ENCODE measurements at regions of chr14 and their contacts with region 1.

Region 1: DNA sequence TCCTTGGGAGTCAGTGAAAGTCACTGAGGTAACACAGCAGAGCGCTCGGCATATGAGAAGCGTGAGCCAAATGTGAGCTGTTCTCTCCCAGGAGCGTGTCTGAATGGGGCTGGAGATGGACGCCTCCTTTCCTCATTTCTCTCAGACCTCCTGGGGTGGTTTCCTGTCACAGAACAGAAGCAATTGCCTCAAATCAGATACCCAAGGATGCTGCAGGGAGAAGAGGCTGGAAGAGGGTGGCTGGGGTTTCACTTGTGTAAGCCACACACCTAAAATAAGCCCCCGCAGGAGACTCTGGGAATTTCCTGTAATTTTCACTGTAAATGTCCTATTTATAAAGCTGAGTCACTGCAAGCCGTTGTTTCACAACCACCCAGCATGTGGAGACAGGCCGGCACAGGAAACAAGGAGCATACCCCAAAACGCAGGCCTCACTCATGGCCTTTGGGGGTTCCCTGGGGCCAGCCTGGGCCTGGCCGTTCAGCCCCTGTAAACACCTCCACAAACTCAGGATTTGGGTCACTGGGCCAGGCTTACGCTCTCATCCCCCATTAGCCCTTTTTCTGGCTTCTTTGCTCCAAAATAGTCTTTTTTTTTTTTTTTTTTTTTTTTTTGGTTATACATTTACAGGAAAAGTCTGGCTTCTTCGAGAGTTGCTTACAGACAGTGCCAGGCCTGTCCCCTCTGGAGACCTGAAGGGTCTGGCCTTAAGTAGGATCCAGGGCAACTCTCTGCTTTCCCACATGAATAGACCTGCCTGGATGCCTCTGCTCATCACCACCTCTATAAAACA is 55.3 kb downstream of the VCPKMT start:
- DNase-seq: peak; percentile 65
- ATAC-seq: peak; percentile 6
- H3K4me3 Mint-ChIP-seq: peak overlapping the region; percentile 90
- H3K27ac Mint-ChIP-seq: peak overlapping the region; percentile 100
- H3K4me1 Mint-ChIP-seq: peaks cover 84% of the 10 kb centered on the region
- H3K27me3 Mint-ChIP-seq: no peaks in the 10 kb centered on the region

Region 2: GRCh38 chr14:49862089-49862673 is 198.9 kb before region 1 on chr14:
- CTCF ChIA-PET with region 1: interaction called, 28 read pairs
- POLR2A ChIA-PET with region 1: interaction called, 7 read pairs
- intact Hi-C with region 1: loop called in 1 of 2 experiments (anchors 1 kb)
- DNase-seq: peak; percentile 92
- ATAC-seq: peak; percentile 13
- H3K4me3 Mint-ChIP-seq: no peak overlapping the region
- H3K27ac Mint-ChIP-seq: no peak overlapping the region
- H3K4me1 Mint-ChIP-seq: peaks cover 20% of the 10 kb centered on the region
- H3K27me3 Mint-ChIP-seq: no peaks in the 10 kb centered on the region

Region 3: DNA sequence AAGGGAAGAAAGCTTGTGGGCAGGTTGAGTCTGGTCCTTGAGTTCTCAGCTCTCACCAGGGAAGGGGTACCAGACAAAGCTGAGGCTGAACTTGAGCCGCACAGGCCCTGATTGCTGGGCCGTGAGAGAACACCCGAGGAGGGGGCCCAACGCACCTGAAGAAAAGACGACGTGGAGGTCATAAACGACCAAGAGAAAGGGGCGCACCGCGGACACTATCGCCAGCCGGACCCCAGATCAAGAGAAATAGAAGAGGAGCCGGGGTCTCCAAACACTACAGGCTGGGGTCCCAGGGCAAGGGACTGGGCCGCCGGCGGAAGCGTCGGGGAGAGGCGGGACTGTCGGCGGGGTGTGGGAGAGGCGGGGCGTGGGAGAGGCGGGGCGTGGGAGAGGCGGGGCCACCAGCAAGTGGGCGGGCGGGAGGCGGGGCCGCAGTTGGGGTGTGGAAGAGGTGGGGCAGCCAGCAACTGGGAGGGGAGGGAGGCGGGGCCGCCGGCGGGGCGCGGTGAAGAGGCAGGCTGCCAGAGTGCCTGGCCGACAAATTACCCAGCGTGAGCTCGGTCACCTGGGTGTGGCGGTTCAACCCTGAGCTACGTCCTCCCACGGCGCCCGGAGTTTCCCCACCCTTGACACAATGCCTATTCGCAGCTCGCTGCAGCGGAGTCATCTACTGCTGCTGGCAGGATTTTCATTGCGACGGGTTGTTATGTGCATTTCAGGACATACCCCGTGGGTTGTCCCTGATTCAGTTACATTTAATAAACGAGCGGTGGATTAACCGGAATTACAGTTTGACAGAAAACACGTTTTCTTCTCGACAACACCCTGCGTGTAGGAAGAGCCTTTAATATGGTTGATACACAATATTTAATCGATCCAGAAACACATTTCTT is 193.0 kb before region 1 on chr14:
- CTCF ChIA-PET with region 1: interaction called, 28 read pairs
- POLR2A ChIA-PET with region 1: interaction called, 7 read pairs
- intact Hi-C with region 1: loop called (anchors 1 kb)
- DNase-seq: peak; percentile 100
- ATAC-seq: peak; percentile 87
- H3K4me3 Mint-ChIP-seq: peak overlapping the region; percentile 98
- H3K27ac Mint-ChIP-seq: peak overlapping the region; percentile 96
- H3K4me1 Mint-ChIP-seq: peaks cover 22% of the 10 kb centered on the region
- H3K27me3 Mint-ChIP-seq: no peaks in the 10 kb centered on the region

Region 4: DNA sequence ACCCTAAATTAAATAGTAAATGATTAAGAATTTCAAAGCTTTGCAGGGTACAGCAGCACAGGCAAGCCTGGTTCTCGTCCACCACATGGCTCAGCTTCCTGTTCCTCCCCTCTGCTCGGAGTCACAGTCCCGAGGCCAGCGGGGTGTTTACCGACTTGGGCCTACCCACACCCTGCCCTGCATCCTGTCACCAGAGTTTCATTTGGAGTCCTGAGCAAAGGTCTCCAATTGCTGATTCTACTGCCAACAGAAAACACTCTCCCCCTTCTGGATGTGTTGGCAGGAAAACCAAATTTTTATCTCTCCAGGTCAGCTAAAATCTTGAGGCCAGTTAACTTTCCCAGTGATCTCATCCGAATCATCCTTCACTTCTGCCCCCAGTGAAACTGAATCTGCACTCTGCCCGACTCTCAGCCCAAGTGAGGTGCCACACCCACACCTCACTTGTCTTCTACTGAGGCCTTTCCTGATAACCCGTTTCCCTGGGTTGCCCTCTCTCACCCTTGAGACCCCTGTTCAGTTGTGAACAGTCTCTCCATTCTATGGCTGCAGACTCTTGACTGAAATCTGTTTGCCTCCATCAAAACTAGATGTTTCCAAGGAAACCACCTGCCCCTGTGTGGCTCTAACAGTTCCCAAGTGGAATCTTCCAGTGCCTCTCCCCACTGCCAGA is 15.9 kb before region 1 on chr14:
- CTCF ChIA-PET with region 1: interaction called, 13 read pairs
- POLR2A ChIA-PET with region 1: interaction called, 13 read pairs
- intact Hi-C with region 1: loop called in 1 of 2 experiments (anchors 1 kb)
- DNase-seq: peak; percentile 83
- ATAC-seq: peak; percentile 79
- H3K4me3 Mint-ChIP-seq: peak overlapping the region; percentile 3
- H3K27ac Mint-ChIP-seq: peak overlapping the region; percentile 91
- H3K4me1 Mint-ChIP-seq: peaks cover 55% of the 10 kb centered on the region
- H3K27me3 Mint-ChIP-seq: no peaks in the 10 kb centered on the region

Region 5: GRCh38 chr14:50103558-50103957 is 42.5 kb after region 1 on chr14:
- CTCF ChIA-PET with region 1: interaction called, 10 read pairs
- POLR2A ChIA-PET with region 1: no interaction called
- intact Hi-C with region 1: loop called (anchors 1 to 2 kb)
- DNase-seq: no peak
- ATAC-seq: no peak
- H3K4me3 Mint-ChIP-seq: peak overlapping the region; percentile 64
- H3K27ac Mint-ChIP-seq: peak overlapping the region; percentile 83
- H3K4me1 Mint-ChIP-seq: peaks cover 48% of the 10 kb centered on the region
- H3K27me3 Mint-ChIP-seq: no peaks in the 10 kb centered on the region

Region 6: GRCh38 chr14:50109342-50109741 is 48.3 kb after region 1 on chr14:
- CTCF ChIA-PET with region 1: interaction called, 10 read pairs
- POLR2A ChIA-PET with region 1: no interaction called
- intact Hi-C with region 1: loop called (anchors 1 to 2 kb)
- DNase-seq: no peak
- ATAC-seq: no peak
- H3K4me3 Mint-ChIP-seq: no peak overlapping the region
- H3K27ac Mint-ChIP-seq: no peak overlapping the region
- H3K4me1 Mint-ChIP-seq: peaks cover 32% of the 10 kb centered on the region
- H3K27me3 Mint-ChIP-seq: no peaks in the 10 kb centered on the region

Region 7: GRCh38 chr14:50139192-50139591 is 78.1 kb after region 1 on chr14:
- CTCF ChIA-PET with region 1: no interaction called
- POLR2A ChIA-PET with region 1: no interaction called
- intact Hi-C with region 1: no loop called
- DNase-seq: no peak
- ATAC-seq: no peak
- H3K4me3 Mint-ChIP-seq: no peak overlapping the region
- H3K27ac Mint-ChIP-seq: no peak overlapping the region
- H3K4me1 Mint-ChIP-seq: no peaks in the 10 kb centered on the region
- H3K27me3 Mint-ChIP-seq: no peaks in the 10 kb centered on the region